Breast epithelium (tissue), 4 donors: ENCODE measurements at regions of chr7 and their contacts with region 1.

Region 1: GRCh38 chr7:16728811-16729210 is 24.7 kb upstream of the TSPAN13 start:
- DNase-seq: no peak
- H3K4me3 ChIP-seq: no peak overlapping the region
- H3K27ac ChIP-seq: no peak overlapping the region
- H3K4me1 ChIP-seq: no peaks in the 10 kb centered on the region
- H3K27me3 ChIP-seq: no peaks in the 10 kb centered on the region
- CTCF ChIP-seq: no peak
- POLR2A ChIP-seq: no peak

Region 2: GRCh38 chr7:17680943-17681351 is 952.1 kb after region 1 on chr7:
- intact Hi-C with region 1: loop called (anchors 5 kb)
- DNase-seq: no peak
- H3K4me3 ChIP-seq: no peak overlapping the region
- H3K27ac ChIP-seq: no peak overlapping the region
- H3K4me1 ChIP-seq: no peaks in the 10 kb centered on the region
- H3K27me3 ChIP-seq: no peaks in the 10 kb centered on the region
- CTCF ChIP-seq: peak; percentile 54 to 66 (median 65)
- POLR2A ChIP-seq: no peak